WTC11 (cell line): ENCODE measurements at regions of chr10 and their contacts with region 1.

Region 1: GRCh38 chr10:18216483-18216882 is 76.3 kb downstream of the CACNB2 start:
- DNase-seq: no peak
- ATAC-seq: peak; percentile 38
- H3K4me3 Mint-ChIP-seq: no peak overlapping the region
- H3K27ac Mint-ChIP-seq: no peak overlapping the region
- H3K4me1 Mint-ChIP-seq: peaks cover 4% of the 10 kb centered on the region
- H3K27me3 Mint-ChIP-seq: no peaks in the 10 kb centered on the region
- CTCF ChIP-seq: no peak

Region 2: DNA sequence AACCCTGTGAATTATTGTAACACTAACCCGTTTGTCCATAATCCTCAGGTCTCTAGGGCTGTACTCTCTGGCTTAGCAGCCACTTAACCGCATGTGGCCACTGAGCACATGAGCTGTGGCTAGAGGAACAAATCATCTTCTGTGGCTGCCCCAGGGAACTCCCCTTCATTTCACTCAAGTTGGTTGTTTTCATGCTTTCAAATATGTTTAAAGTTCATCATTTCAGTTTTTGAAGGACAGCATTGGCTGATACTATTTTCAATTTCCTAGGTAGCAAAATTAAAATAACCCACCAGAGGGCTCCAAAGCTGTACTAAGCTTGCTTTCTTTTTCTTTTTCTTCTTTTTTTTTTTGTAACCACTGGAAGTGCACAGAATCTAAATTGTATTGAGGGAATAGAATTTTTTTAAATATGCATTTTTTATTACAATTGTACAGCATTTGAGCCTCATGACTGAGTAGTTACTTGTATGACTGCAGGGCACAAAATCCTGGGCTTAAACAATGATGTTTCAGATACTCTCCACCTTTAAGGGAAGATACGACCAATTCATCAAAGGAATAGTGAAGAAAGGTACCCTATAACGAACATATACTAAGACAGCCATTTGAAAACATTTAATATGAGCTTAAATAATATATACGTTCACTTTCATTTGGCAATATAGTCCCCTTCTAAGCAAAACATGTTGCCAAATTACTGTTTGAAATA is 368.7 kb before region 1 on chr10:
- CTCF ChIA-PET with region 1: interaction called, 14 read pairs
- POLR2A ChIA-PET with region 1: no interaction called
- DNase-seq: no peak
- ATAC-seq: peak; percentile 26; the same call in 1 of the 2 replicates
- H3K4me3 Mint-ChIP-seq: no peak overlapping the region
- H3K27ac Mint-ChIP-seq: no peak overlapping the region
- H3K4me1 Mint-ChIP-seq: peaks cover 12% of the 10 kb centered on the region
- H3K27me3 Mint-ChIP-seq: no peaks in the 10 kb centered on the region
- CTCF ChIP-seq: no peak

Region 3: GRCh38 chr10:18066947-18067346 is 149.5 kb before region 1 on chr10:
- CTCF ChIA-PET with region 1: no interaction called
- POLR2A ChIA-PET with region 1: no interaction called
- DNase-seq: no peak
- ATAC-seq: no peak
- H3K4me3 Mint-ChIP-seq: no peak overlapping the region
- H3K27ac Mint-ChIP-seq: no peak overlapping the region
- H3K4me1 Mint-ChIP-seq: no peaks in the 10 kb centered on the region
- H3K27me3 Mint-ChIP-seq: no peaks in the 10 kb centered on the region
- CTCF ChIP-seq: no peak

Region 4: GRCh38 chr10:18233775-18234174 is 17.3 kb after region 1 on chr10:
- CTCF ChIA-PET with region 1: interaction called, 14 read pairs
- POLR2A ChIA-PET with region 1: no interaction called
- DNase-seq: peak; percentile 28
- ATAC-seq: peak; percentile 91
- H3K4me3 Mint-ChIP-seq: no peak overlapping the region
- H3K27ac Mint-ChIP-seq: no peak overlapping the region
- H3K4me1 Mint-ChIP-seq: peaks cover 23% of the 10 kb centered on the region
- H3K27me3 Mint-ChIP-seq: no peaks in the 10 kb centered on the region
- CTCF ChIP-seq: peak; percentile 35; the same call in 1 of the 2 replicates